Naive thymus-derived CD4-positive, alpha-beta T cell (primary cell): ENCODE measurements at regions of chr22 and their contacts with region 1.

Region 1: DNA sequence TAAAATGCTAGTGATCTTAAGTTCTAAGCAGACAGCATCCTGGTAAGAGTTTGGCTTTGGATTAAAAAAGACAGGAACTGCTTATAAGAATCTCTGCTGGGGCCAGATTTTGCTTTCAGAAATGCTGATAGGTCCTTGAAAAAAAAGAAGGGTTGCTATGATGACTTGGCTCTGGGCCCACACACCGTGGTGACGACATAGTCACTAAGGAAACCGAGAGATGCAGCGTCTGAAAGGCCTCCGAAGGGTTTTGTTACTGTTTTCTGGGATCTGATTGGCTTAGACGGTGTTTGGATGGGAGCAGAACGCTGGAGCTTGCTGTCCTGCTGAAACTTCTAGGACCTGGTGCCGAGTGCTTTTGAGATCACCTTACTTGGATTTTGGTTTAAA is 8.4 kb downstream of the FAM118A start:
- DNase-seq: peak; percentile 72 to 98 (median 96)
- ATAC-seq: peak; percentile 79
- H3K4me3 ChIP-seq: peak overlapping the region; percentile 49
- H3K4me3 Mint-ChIP-seq: peak overlapping the region; percentile 72 to 88 (median 85)
- H3K27ac ChIP-seq: peak overlapping the region; percentile 92
- H3K27ac Mint-ChIP-seq: peak overlapping the region; percentile 98 to 100 (median 99)
- H3K4me1 ChIP-seq: peaks cover 32 to 59% of the 10 kb centered on the region in 2 donors
- H3K4me1 Mint-ChIP-seq: peaks cover 32 to 100% (median 90%) of the 10 kb centered on the region in 7 donors
- H3K27me3 ChIP-seq: no peaks in the 10 kb centered on the region
- H3K27me3 Mint-ChIP-seq: no peaks in the 10 kb centered on the region

Region 2: GRCh38 chr22:45163451-45164269 is 154.5 kb before region 1 on chr22 and contains the start of gene NUP50:
- CTCF ChIA-PET with region 1: no interaction called
- POLR2A ChIA-PET with region 1: no interaction called
- intact Hi-C with region 1: loop called in 1 of 2 experiments (anchors 5 kb)
- DNase-seq: peak; percentile 93 to 98 (median 97)
- ATAC-seq: peak; percentile 89
- H3K4me3 ChIP-seq: peak within 1 kb of the TSS; percentile 81
- H3K4me3 Mint-ChIP-seq: peak within 1 kb of the TSS; percentile 85 to 100 (median 96)
- H3K27ac ChIP-seq: peak within 1 kb of the TSS; percentile 77
- H3K27ac Mint-ChIP-seq: peak within 1 kb of the TSS; percentile 88 to 97 (median 96)
- H3K4me1 ChIP-seq: peaks cover 26 to 30% of the 10 kb centered on the region in 2 donors
- H3K4me1 Mint-ChIP-seq: peaks cover 37 to 72% (median 63%) of the 10 kb centered on the region in 7 donors
- H3K27me3 ChIP-seq: no peaks in the 10 kb centered on the region
- H3K27me3 Mint-ChIP-seq: no peaks in the 10 kb centered on the region
- total RNA-seq, gene NUP50: 107 to 151 (median 130) TPM

Region 3: DNA sequence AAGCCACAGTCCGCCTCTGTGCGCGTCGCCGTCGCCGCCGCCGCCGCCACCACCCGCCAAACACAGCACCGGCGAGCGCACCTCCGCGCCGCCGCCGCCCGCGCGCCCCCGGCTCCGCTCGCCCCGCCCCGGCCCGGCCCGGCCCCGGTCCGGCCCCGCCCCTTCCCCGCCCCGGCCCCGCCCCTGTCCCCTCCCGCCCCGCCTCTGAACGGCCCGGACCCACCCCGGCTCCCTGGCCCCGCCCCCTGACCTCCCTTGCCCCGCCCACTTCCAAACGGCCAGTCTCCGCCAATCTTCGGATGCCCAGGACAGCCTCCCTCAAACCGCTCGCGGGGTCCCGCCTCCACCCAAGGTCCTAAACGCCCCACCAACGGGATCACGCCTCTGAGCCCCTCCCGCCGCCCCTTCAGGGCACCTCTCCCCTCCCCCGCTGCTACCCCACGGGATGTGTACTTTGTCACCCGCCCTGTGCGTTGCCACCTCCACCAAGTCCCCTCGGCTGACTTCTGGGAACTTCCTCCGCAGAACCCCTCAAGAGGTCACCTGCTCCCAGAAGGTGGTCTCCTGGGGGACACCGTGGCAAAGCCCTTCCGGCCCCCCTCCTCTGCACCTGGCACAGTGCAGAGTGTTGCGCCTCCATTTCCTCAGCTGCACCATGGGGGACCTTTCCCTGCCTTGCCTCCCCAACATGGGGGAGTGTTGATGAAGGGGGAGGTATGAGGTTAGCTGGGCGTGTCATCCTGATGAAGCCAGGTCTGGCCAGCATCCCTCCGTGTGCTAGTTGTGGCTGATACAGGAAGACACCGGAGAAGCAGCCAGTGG is 77.1 kb before region 1 on chr22 and contains the start of gene KIAA0930:
- CTCF ChIA-PET with region 1: no interaction called
- POLR2A ChIA-PET with region 1: no interaction called
- intact Hi-C with region 1: loop called in 1 of 2 experiments (anchors 2 kb)
- DNase-seq: peak; percentile 62 to 84 (median 74)
- ATAC-seq: peak; percentile 90
- H3K4me3 ChIP-seq: peak within 1 kb of the TSS; percentile 60
- H3K4me3 Mint-ChIP-seq: peak within 1 kb of the TSS; percentile 85 to 99 (median 94)
- H3K27ac ChIP-seq: peak within 1 kb of the TSS; percentile 66
- H3K27ac Mint-ChIP-seq: peak within 1 kb of the TSS; percentile 72 to 93 (median 87)
- H3K4me1 ChIP-seq: peaks cover 11 to 17% of the 10 kb centered on the region in 2 donors
- H3K4me1 Mint-ChIP-seq: peaks cover 18 to 40% (median 32%) of the 10 kb centered on the region in 7 donors
- H3K27me3 ChIP-seq: no peaks in the 10 kb centered on the region
- H3K27me3 Mint-ChIP-seq: peaks cover 0 to 2% (median 0%) of the 10 kb centered on the region in 5 donors
- total RNA-seq, gene KIAA0930: 13.2 to 58.2 (median 27.9) TPM

Region 4: DNA sequence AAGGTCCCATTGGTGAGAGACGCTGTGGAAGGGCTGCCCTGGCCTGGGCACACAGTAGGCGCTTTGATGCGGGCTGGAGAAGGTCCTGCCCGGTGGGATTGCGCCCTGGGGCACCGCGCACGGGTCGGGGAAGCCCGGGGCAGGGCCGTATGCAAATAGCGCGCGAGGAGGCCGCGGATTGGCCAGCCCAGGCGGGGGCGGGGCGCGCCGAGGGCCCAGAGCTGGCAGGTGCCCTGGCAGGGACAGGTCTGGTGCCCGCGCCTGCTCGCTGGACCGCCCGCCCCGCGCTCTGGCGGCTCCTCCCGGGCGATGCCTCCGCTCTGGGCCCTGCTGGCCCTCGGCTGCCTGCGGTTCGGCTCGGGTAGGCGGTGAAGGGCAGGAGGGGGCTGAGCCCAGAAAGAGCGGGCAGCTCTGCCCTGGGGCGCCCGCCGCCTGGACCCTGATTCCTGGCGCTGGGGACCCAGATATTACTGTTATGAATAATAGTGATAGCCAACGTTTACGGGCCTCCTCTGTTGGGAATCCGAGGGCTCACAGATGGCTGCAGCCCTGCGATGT is 33.4 kb before region 1 on chr22 and contains the start of gene UPK3A:
- CTCF ChIA-PET with region 1: no interaction called
- POLR2A ChIA-PET with region 1: no interaction called
- intact Hi-C with region 1: loop called in 1 of 2 experiments (anchors 5 kb)
- DNase-seq: peak; percentile 43 to 65 (median 58)
- ATAC-seq: peak; percentile 98
- H3K4me3 ChIP-seq: peak within 1 kb of the TSS; percentile 46
- H3K4me3 Mint-ChIP-seq: peak within 1 kb of the TSS; percentile 9 to 64 (median 50)
- H3K27ac ChIP-seq: no peak within 1 kb of the TSS
- H3K27ac Mint-ChIP-seq: peak within 1 kb of the TSS in 1 of 9 donors; percentile 60
- H3K4me1 ChIP-seq: peaks cover 3 to 10% of the 10 kb centered on the region in 2 donors
- H3K4me1 Mint-ChIP-seq: peaks cover 4 to 16% (median 13%) of the 10 kb centered on the region in 7 donors
- H3K27me3 ChIP-seq: no peaks in the 10 kb centered on the region
- H3K27me3 Mint-ChIP-seq: peaks cover 4 to 43% (median 10%) of the 10 kb centered on the region in 5 donors
- total RNA-seq, gene UPK3A: 0.61 TPM in 1 of 5 experiments, not detected in the others

Region 5: GRCh38 chr22:45336971-45337431 is 18.8 kb after region 1 on chr22:
- CTCF ChIA-PET with region 1: no interaction called
- POLR2A ChIA-PET with region 1: interaction called, 13 read pairs
- intact Hi-C with region 1: loop called (anchors 1 to 2 kb)
- DNase-seq: peak in 7 of 9 donors; percentile 37 to 79 (median 65)
- ATAC-seq: peak; percentile 47
- H3K4me3 ChIP-seq: no peak overlapping the region
- H3K4me3 Mint-ChIP-seq: peak overlapping the region in 8 of 10 donors; percentile 46 to 75 (median 62)
- H3K27ac ChIP-seq: peak overlapping the region; percentile 1
- H3K27ac Mint-ChIP-seq: peak overlapping the region in 8 of 9 donors; percentile 85 to 99 (median 94)
- H3K4me1 ChIP-seq: peaks cover 0 to 20% of the 10 kb centered on the region in 2 donors
- H3K4me1 Mint-ChIP-seq: peaks cover 5 to 68% (median 53%) of the 10 kb centered on the region in 7 donors
- H3K27me3 ChIP-seq: no peaks in the 10 kb centered on the region
- H3K27me3 Mint-ChIP-seq: no peaks in the 10 kb centered on the region

Region 6: DNA sequence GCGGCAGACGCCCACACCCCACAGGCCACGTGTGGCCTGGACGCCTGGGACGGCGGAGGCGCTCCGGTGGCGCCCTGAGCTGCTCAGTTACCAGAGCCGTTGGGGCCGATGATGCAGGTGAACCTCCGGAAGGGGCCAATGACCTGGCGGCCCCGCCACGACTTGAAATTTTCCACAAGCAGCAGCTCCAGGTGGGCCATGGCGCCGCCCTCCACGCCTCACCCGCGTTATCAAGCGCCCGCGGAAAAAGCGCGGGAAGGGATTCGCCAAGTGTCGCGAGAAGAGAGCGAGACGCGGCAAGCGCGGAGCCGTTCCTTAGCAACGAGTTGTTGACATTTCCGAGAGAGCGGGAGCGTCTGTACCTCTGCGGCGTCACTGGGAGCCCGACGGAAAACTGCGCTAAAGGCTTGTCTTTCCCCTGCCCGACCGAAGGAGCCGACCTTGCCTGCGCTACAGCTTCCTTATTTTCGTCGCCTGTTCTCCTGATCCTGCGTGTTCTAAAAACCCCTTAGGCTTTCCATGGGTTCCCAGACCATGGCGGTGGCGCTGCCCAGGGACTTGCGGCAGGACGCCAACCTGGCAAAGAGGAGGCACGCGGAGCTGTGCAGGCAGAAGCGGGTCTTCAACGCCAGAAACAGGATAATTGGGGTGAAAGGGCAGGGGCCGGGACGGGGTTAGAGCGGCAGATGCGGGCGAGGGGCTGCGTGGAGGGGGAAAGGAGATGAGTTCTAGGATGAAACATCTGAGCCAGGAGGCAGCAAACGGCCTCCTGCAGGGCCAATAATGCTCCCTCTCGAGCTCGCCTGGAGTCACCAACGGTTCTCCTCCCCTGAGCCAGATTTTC is 95.4 kb after region 1 on chr22 and contains the starts of genes RIBC2 and SMC1B:
- CTCF ChIA-PET with region 1: no interaction called
- POLR2A ChIA-PET with region 1: no interaction called
- intact Hi-C with region 1: loop called (anchors 1 kb)
- DNase-seq: peak; percentile 58 to 89 (median 84)
- ATAC-seq: peak; percentile 97
- H3K4me3 ChIP-seq: peak within 1 kb of the TSS; percentile 77
- H3K4me3 Mint-ChIP-seq: peak within 1 kb of the TSS; percentile 68 to 90 (median 80)
- H3K27ac ChIP-seq: peak within 1 kb of the TSS; percentile 54
- H3K27ac Mint-ChIP-seq: peak within 1 kb of the TSS; percentile 36 to 96 (median 74)
- H3K4me1 ChIP-seq: peaks cover 8 to 12% of the 10 kb centered on the region in 2 donors
- H3K4me1 Mint-ChIP-seq: peaks cover 0 to 21% (median 14%) of the 10 kb centered on the region in 7 donors
- H3K27me3 ChIP-seq: no peaks in the 10 kb centered on the region
- H3K27me3 Mint-ChIP-seq: peaks cover 0 to 4% (median 0%) of the 10 kb centered on the region in 5 donors
- total RNA-seq, gene RIBC2: 0.59 to 9.5 (median 1.4) TPM in 3 of 5 experiments, not detected in the others
- total RNA-seq, gene SMC1B: 0.11 to 0.70 TPM in 2 of 5 experiments, not detected in the others